ENCODE measurements at regions of chr2 and their contacts with region 1.

Region 1: GRCh38 chr2:26922405-26923188 is 47.8 kb upstream of the MAPRE3 start:
- DNase-seq: peak; percentile 46
- H3K4me3 Mint-ChIP-seq: no peak overlapping the region
- H3K27ac Mint-ChIP-seq: no peak overlapping the region
- H3K4me1 Mint-ChIP-seq: no peaks in the 10 kb centered on the region
- H3K27me3 Mint-ChIP-seq: peaks cover 35% of the 10 kb centered on the region

Region 2: DNA sequence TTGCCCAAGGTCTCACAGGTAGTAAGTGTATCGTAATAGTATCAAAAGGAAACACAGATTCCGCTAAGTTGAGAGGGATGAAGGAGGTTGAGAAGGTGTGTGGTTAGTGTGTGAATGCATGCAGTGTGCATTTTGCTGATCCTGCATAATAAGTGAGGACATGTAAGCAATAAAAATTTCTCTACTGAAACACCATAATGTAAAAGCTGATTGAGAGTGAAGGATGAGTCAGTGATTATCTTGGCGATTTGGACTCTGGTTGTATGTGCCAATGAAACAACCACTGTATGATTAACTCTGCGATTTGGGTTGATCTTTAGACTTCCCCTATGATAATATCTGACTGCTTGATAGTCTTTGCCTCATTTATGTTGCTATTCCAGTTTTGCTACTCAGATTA is 559.3 kb before region 1 on chr2:
- CTCF ChIA-PET with region 1: no interaction called
- DNase-seq: no peak
- H3K4me3 Mint-ChIP-seq: no peak overlapping the region
- H3K27ac Mint-ChIP-seq: no peak overlapping the region
- H3K4me1 Mint-ChIP-seq: peaks cover 19% of the 10 kb centered on the region
- H3K27me3 Mint-ChIP-seq: no peaks in the 10 kb centered on the region

Region 3: GRCh38 chr2:26852405-26853306 is 69.9 kb before region 1 on chr2:
- CTCF ChIA-PET with region 1: interaction called, 10 read pairs
- DNase-seq: no peak
- H3K4me3 Mint-ChIP-seq: no peak overlapping the region
- H3K27ac Mint-ChIP-seq: no peak overlapping the region
- H3K4me1 Mint-ChIP-seq: peaks cover 10% of the 10 kb centered on the region
- H3K27me3 Mint-ChIP-seq: peaks cover 67% of the 10 kb centered on the region

Region 4: DNA sequence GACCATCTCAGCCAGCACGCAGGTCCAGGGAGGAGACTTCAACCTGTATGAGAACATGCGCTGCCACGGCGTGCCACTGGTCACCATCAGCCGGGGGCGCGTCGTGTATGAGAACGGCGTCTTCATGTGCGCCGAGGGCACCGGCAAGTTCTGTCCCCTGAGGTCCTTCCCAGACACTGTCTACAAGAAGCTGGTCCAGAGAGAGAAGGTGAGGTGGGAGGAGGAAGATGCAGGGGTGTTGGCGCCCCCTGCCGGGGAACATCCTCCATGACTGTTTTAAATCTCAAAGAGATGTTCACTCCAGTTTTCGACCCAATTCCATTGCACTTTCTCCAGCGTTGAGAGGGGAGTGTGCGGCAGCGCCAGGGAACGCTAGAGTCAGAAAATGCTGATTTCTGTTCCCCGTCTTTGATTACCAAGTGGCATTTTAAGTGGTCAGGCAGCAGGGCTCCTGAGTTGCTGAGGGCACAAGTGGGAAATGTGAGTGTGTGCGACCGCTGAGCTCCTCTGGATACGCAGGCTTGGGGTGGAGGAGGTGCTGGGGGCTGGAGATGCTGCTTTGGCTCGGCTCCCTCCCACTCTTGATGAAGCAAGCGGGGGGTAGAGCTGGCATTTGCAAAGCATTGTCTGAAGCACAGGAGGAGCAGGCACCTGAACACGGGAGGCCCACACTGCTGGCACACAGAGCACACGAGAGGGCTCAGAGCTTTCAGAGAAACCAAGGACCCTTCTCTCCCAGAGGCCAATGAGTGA is 20.1 kb after region 1 on chr2:
- CTCF ChIA-PET with region 1: interaction called, 14 read pairs
- DNase-seq: peak; percentile 75
- H3K4me3 Mint-ChIP-seq: no peak overlapping the region
- H3K27ac Mint-ChIP-seq: no peak overlapping the region
- H3K4me1 Mint-ChIP-seq: no peaks in the 10 kb centered on the region
- H3K27me3 Mint-ChIP-seq: peaks cover 33% of the 10 kb centered on the region